Thyroid gland (tissue), 4 donors: ENCODE measurements at regions of chr10 and their contacts with region 1.

Region 1: GRCh38 chr10:86899670-86900276 is 57.6 kb downstream of the MMRN2 start:
- DNase-seq: peak; percentile 70 to 74
- H3K4me3 ChIP-seq: no peak overlapping the region
- H3K27ac ChIP-seq: peak overlapping the region in 1 of 3 donors; percentile 13
- H3K4me1 ChIP-seq: peaks cover 0 to 25% of the 10 kb centered on the region in 2 donors
- H3K27me3 ChIP-seq: no peaks in the 10 kb centered on the region
- CTCF ChIP-seq: peak in 5 of 6 experiments; percentile 47 to 82 (median 76)
- POLR2A ChIP-seq: no peak

Region 2: DNA sequence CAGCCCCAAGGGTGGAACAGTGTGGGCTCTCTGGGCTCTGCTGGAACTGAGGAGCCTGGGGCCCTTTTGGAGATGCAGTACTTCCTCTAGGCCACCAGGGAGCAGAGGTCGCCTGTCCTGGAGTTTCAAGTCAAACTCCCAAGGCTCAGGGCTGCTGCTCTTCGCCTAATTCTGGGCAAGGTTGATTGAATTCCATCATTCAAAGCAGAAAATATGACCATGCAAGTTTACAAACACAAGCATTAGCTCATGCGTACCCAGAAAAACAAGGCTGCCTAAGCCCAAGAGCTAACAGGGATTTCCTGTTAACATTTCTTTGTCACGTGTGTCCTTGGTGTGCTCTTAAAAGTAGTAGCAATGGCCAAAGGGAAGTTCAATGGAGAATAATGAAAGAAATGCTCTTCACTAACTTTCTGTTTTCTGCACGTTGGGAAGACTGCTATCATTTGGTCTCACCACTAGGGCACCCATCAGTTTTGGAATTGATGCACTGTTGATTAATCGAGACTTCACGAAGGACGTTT is 211.3 kb before region 1 on chr10:
- intact Hi-C with region 1: loop called (anchors 5 kb)
- DNase-seq: peak; percentile 64 to 69
- H3K4me3 ChIP-seq: no peak overlapping the region
- H3K27ac ChIP-seq: no peak overlapping the region
- H3K4me1 ChIP-seq: peaks cover 3 to 9% of the 10 kb centered on the region in 2 donors
- H3K27me3 ChIP-seq: no peaks in the 10 kb centered on the region
- CTCF ChIP-seq: peak; percentile 88 to 95 (median 92)
- POLR2A ChIP-seq: no peak

Region 3: DNA sequence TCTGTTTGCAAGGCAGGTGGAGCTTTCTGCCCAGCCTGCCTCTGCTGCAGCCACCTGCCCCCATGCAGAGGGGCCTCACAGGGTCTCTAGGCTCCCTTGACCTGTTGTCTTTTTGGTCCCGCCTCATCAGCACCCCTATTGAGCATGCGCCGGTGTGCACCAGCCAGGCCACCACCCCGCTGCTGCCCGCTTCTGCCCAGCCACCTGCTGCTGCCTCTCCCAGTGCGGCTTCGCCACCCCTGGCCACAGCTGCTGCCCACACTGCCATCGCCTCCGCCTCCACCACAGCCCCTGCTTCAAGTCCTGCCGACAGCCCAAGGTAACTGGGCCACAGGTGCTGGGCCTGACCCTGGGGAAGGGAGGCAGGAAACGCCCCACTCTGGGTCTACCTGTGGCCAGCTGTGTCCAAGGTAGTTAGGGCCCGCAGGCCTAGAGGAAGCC is 193.4 kb before region 1 on chr10:
- intact Hi-C with region 1: loop called (anchors 5 kb)
- DNase-seq: no peak
- H3K4me3 ChIP-seq: no peak overlapping the region
- H3K27ac ChIP-seq: no peak overlapping the region
- H3K4me1 ChIP-seq: peaks cover 17 to 30% of the 10 kb centered on the region in 2 donors
- H3K27me3 ChIP-seq: no peaks in the 10 kb centered on the region
- CTCF ChIP-seq: no peak
- POLR2A ChIP-seq: no peak